ENCODE measurements at regions of chr13 and their contacts with region 1.

Region 1: GRCh38 chr13:99356158-99357091 is 49.2 kb upstream of the GPR183 start:
- DNase-seq: peak; percentile 48
- ATAC-seq: peak; percentile 25
- H3K4me3 Mint-ChIP-seq: peak overlapping the region; percentile 42
- H3K27ac Mint-ChIP-seq: peak overlapping the region; percentile 92
- H3K4me1 Mint-ChIP-seq: peaks cover 99% of the 10 kb centered on the region
- H3K27me3 Mint-ChIP-seq: no peaks in the 10 kb centered on the region

Region 2: DNA sequence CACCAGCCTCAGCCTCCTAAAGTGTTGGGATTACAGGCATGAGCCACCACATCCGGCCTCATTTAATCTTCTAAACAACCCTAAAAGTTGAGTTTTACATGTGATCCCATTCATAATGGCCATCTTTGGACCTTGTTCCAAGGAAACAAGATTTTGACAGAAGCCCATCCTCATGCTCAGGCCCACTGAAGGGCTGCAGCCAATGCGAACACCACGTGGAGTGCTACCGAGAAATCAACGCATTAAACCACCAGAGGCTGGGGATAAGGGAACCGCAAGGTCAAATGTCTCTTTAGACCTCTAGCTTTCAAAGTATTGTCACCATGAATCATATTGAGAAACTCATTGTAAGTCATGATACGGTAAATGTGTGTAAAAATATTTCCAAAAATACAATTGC is 329.2 kb before region 1 on chr13:
- CTCF ChIA-PET with region 1: no interaction called
- POLR2A ChIA-PET with region 1: no interaction called
- intact Hi-C with region 1: loop called in 1 of 2 experiments (anchors 2 kb)
- DNase-seq: peak; percentile 46
- ATAC-seq: peak; percentile 41
- H3K4me3 Mint-ChIP-seq: no peak overlapping the region
- H3K27ac Mint-ChIP-seq: peak overlapping the region; percentile 91
- H3K4me1 Mint-ChIP-seq: peaks cover 85% of the 10 kb centered on the region
- H3K27me3 Mint-ChIP-seq: no peaks in the 10 kb centered on the region

Region 3: DNA sequence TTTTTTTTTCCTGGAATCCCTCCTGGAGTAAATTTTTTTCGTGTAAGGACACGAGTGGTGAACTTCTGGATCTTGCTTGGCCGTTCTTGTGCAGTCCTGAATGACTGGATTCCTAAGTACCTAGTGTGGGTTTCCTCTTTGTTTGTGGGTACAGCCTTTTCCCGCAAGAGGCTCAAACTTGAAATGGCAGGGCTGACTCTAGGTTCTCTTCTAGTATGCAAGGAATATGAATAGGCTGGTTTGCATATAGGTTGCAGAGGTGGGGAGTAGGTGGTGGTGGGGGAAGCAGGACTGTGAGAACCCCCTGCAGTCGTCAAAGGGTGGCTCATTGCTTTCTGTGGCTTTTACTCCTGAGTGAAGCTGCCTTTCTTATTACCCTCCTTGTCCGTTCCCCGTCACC is 142.2 kb before region 1 on chr13:
- CTCF ChIA-PET with region 1: no interaction called
- POLR2A ChIA-PET with region 1: interaction called, 4 read pairs
- intact Hi-C with region 1: loop called (anchors 2 kb)
- DNase-seq: peak; percentile 82
- ATAC-seq: peak; percentile 80
- H3K4me3 Mint-ChIP-seq: peak overlapping the region; percentile 74
- H3K27ac Mint-ChIP-seq: peak overlapping the region; percentile 87
- H3K4me1 Mint-ChIP-seq: peaks cover 79% of the 10 kb centered on the region
- H3K27me3 Mint-ChIP-seq: no peaks in the 10 kb centered on the region

Region 4: DNA sequence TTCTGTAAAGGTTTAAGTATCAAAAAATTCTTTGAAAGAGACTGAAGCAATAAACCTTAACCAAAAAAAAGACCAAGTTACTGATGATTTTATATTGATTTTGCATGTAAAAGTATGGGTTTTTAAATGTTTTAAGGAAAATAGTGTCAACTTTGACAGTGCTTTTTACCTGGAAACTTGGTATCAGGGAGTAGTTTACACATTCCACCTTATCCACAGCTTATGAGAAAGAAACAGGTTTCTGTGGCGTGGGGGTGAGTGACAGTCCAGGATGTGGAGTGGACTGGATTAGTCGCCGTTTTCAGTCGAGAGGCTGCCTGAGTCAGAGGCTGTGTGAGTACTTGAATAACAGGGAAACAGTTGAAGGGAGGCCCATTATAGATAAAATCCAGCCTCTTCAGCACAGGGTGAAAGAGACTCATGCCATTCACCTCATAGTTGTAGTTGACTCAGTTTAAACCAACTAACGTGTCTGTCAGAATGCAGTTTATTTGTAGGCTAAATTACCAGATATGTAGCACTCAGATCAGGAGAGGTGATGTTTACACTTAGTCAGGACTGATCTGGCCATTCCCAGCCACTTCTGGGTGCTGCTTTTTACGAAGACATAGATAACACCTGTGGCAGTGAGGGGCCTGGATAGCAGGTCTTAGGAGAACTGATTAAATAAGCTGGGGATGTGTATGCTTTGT is 48.6 kb before region 1 on chr13:
- CTCF ChIA-PET with region 1: interaction called, 21 read pairs
- POLR2A ChIA-PET with region 1: interaction called, 23 read pairs
- intact Hi-C with region 1: loop called (anchors 1 kb)
- DNase-seq: peak; percentile 88
- ATAC-seq: peak; percentile 82
- H3K4me3 Mint-ChIP-seq: peak overlapping the region; percentile 85
- H3K27ac Mint-ChIP-seq: peak overlapping the region; percentile 98
- H3K4me1 Mint-ChIP-seq: peaks cover 73% of the 10 kb centered on the region
- H3K27me3 Mint-ChIP-seq: no peaks in the 10 kb centered on the region

Region 5: DNA sequence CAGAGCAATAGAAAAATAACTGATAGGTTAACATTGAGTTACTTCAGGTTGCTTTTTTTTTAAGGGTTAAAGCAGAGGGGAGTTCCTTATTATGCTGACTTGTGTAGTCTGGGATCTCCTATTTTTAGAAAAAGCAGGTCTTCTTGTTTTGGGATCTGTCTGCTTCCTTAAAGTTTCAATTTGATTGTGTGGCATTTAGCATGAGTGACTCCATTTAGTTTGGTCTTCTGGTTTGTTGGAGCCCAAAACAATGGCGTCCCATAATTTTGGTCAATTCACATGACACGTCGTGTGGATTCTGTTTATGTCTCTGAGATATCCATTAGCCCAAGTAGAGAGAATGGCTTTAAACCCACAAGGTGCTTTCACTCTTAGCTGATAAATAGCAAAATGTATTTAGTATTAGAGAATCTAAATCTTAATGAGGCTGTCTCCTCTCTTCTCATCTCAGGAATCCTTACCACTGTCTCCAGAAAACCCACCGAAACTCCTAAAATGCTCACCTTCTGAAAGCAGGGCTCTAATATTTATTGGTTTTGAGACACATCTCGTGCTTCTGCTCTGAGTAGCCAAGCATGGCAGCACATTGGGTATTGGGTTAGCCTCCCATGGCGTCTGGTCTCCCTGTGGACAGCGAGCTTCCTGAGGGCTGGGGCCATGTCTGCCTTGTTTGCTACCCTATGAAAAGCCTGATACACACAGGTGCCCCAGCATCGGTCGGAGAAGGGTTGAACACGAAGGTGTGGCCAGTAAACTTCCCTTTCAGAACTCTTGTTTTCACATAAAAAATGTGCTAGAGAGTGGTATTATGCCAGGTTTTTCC is 18.0 kb after region 1 on chr13:
- CTCF ChIA-PET with region 1: interaction called, 13 read pairs
- POLR2A ChIA-PET with region 1: interaction called, 4 read pairs
- intact Hi-C with region 1: loop called (anchors 1 kb)
- DNase-seq: no peak
- ATAC-seq: no peak
- H3K4me3 Mint-ChIP-seq: no peak overlapping the region
- H3K27ac Mint-ChIP-seq: peak overlapping the region; percentile 53
- H3K4me1 Mint-ChIP-seq: peaks cover 84% of the 10 kb centered on the region
- H3K27me3 Mint-ChIP-seq: no peaks in the 10 kb centered on the region

Region 6: DNA sequence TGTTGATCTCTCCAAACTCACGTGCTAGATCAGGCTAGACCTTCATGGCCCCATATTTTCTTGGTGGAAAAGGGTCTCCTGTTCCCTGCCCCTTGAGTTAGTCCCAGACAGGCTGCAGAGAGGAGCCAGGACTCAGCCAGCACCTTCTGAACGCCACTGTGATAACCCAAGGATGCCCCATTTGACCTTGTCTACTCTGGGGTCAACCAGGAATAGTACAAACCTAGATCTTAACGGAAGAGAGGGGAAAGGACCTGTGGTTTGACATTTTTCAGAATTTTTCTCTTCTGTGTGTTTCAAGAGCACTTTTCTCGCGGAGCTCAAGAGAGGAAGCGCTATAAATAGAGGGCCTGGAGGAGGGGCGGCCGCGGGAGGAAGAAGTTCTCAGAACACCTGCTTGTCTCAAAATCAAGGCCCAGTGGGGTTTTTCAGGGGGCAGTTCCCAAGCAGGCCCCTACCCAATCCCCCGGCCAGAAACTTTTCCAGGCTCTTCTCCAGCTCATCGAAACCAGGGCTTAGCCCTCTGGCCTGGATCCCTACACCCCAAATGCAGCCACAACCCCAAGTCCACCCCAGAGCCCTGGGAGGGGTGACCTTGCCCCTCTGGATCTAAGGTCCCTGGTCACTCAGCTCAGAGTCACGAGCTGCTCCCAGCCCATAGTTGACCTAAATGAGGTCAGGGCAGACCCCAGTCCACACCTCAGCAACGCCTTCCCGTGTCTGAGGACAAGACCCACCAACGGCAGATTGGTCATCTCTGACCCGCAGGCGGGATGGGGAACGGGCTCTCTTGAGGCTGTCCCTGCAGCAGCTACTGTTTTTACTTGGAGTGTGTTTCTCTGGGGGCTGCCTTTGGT is 69.3 kb after region 1 on chr13:
- CTCF ChIA-PET with region 1: interaction called, 5 read pairs
- POLR2A ChIA-PET with region 1: no interaction called
- intact Hi-C with region 1: loop called in 1 of 2 experiments (anchors 2 kb)
- DNase-seq: peak; percentile 80
- ATAC-seq: peak; percentile 37
- H3K4me3 Mint-ChIP-seq: peak overlapping the region; percentile 65
- H3K27ac Mint-ChIP-seq: peak overlapping the region; percentile 93
- H3K4me1 Mint-ChIP-seq: peaks cover 67% of the 10 kb centered on the region
- H3K27me3 Mint-ChIP-seq: no peaks in the 10 kb centered on the region

Measured in activated CD4-positive, alpha-beta T cell treated with anti-CD3 and anti-CD28 coated beads for 36 hours (primary cell).